Natural killer cell (primary cell): ENCODE measurements at regions of chr6 and their contacts with region 1.

Region 1: GRCh38 chr6:29964887-29965562 is 22.7 kb downstream of the HLA-A start:
- DNase-seq: peak; percentile 67 to 91
- ATAC-seq: peak; percentile 91 to 99 (median 97)
- H3K4me3 ChIP-seq: peak overlapping the region; percentile 34
- H3K4me3 Mint-ChIP-seq: peak overlapping the region; percentile 87
- H3K27ac ChIP-seq: peak overlapping the region; percentile 73
- H3K27ac Mint-ChIP-seq: peak overlapping the region; percentile 86 to 91
- H3K4me1 ChIP-seq: peaks cover 22% of the 10 kb centered on the region
- H3K4me1 Mint-ChIP-seq: peaks cover 32 to 35% of the 10 kb centered on the region in 2 donors
- H3K27me3 ChIP-seq: no peaks in the 10 kb centered on the region
- H3K27me3 Mint-ChIP-seq: no peaks in the 10 kb centered on the region
- CTCF ChIP-seq: no peak

Region 2: DNA sequence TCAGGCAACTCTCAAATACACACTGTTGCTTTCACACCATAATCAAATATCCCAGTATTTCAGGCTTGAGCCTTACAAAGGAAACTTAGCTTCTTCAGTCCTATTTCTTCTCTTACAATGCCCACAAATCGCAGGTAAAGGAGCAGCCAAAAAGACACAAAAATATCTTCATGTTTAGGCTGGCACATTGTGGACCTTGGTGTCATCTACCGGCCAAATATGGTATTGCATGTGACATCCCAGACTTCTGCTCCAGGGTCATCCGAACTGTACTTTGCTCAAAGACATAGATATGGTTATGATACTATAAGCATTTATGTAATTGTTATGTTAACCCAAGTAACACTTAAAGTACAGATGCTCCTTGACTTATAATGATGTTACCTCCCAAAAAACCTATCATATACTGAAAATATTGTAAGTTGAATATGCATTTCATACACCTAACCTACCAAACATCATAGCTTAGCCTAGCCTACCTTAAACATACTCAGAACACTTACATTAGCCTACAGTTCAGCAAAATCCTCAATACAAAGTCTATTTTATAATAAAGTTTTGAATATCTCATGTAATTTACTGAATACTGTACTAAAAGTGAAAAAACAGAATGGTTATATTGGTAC is 375.5 kb before region 1 on chr6:
- intact Hi-C with region 1: no loop called
- DNase-seq: peak in 1 of 2 donors; percentile 79
- ATAC-seq: peak; percentile 70 to 85 (median 82)
- H3K4me3 ChIP-seq: no peak overlapping the region
- H3K4me3 Mint-ChIP-seq: no peak overlapping the region
- H3K27ac ChIP-seq: no peak overlapping the region
- H3K27ac Mint-ChIP-seq: no peak overlapping the region
- H3K4me1 ChIP-seq: no peaks in the 10 kb centered on the region
- H3K4me1 Mint-ChIP-seq: no peaks in the 10 kb centered on the region
- H3K27me3 ChIP-seq: no peaks in the 10 kb centered on the region
- H3K27me3 Mint-ChIP-seq: peaks cover 28 to 51% of the 10 kb centered on the region in 2 donors
- CTCF ChIP-seq: peak; percentile 98

Region 3: DNA sequence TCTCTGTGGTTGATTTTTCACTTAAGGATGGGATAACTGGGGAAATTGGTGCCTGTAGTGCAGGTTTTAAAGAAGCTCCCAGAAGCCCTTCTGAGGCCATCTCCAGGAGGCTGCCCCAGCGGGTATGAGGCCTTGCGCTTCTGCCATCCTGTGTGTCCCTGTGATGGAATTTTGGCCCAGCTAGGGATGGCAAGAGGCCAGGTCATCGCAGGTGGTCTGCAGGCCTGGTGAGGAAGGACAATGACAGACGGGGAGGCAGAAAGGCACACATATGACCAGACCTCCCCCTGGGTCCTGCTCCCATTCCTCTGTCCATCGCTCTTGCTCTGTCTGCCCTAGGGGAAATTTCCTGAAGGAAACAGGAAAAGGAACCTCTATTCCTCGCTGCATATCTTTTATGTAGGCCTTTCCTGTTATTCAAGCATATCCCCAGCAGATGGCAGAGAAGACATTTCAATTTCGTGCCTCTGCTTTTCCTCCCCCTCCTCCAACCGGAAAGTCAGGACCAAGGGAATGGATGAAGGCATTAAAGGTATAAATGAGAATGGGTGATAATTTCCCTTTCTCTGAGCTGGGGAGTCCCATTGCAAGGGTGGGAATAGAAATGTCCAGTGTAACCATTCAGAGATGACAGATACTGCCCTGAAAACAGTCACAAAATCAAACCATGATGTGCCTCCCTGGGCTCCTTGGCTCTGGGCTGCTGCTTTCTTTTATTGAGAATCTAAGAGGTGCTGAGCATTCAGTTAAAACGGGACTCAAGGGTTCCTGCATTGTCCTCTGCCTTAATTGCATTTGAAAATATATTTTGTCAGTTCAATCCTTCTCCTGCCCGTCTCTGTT is 259.4 kb before region 1 on chr6:
- intact Hi-C with region 1: loop called (anchors 10 kb)
- DNase-seq: peak in 1 of 2 donors; percentile 73
- ATAC-seq: no peak
- H3K4me3 ChIP-seq: no peak overlapping the region
- H3K4me3 Mint-ChIP-seq: peak overlapping the region; percentile 55
- H3K27ac ChIP-seq: no peak overlapping the region
- H3K27ac Mint-ChIP-seq: peak overlapping the region; percentile 65 to 87
- H3K4me1 ChIP-seq: peaks cover 52% of the 10 kb centered on the region
- H3K4me1 Mint-ChIP-seq: peaks cover 57 to 66% of the 10 kb centered on the region in 2 donors
- H3K27me3 ChIP-seq: peaks cover 6% of the 10 kb centered on the region
- H3K27me3 Mint-ChIP-seq: peaks cover 10 to 17% of the 10 kb centered on the region in 2 donors
- CTCF ChIP-seq: peak; percentile 67

Region 4: DNA sequence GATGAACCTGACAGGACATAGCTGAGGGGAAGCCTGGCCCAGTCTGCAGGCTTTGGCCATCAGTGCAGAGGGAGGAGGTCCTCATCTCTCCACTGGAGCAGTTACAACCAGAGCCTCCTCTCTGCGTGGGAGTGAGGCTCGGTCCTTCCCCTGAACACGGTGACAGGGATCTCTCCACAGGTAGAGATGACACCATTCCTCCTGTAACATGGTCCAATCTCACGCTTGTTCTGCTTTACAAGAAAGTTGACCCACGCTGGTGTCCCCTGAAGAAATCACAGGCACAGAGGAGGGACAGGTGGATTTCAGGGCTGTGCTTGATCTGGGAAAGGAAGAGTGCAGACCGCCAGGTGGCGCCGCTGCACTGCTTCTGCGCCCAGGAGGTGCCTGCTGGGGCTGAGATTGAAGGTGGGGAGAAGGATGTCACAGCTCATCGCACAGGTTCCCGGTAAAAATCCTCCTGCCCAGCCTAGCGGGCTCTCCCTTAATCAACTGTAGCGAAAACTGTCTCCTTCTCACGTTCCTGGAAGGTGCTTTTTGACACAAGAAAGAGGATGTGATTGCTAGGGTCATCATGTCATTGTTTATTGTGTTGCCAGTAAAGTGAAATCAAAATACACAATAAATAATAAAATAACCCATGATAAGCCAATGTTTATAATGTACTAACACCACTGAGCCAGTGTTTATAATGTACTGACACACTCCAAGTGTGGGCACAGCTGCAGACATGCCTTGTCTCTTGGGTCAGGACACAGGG is 117.0 kb before region 1 on chr6:
- intact Hi-C with region 1: loop called (anchors 2 kb)
- DNase-seq: peak; percentile 83 to 93
- ATAC-seq: peak; percentile 82 to 95 (median 89)
- H3K4me3 ChIP-seq: no peak overlapping the region
- H3K4me3 Mint-ChIP-seq: no peak overlapping the region
- H3K27ac ChIP-seq: no peak overlapping the region
- H3K27ac Mint-ChIP-seq: no peak overlapping the region
- H3K4me1 ChIP-seq: peaks cover 10% of the 10 kb centered on the region
- H3K4me1 Mint-ChIP-seq: peaks cover 12 to 16% of the 10 kb centered on the region in 2 donors
- H3K27me3 ChIP-seq: peaks cover 29% of the 10 kb centered on the region
- H3K27me3 Mint-ChIP-seq: peaks cover 53 to 75% of the 10 kb centered on the region in 2 donors
- CTCF ChIP-seq: peak; percentile 97

Region 5: GRCh38 chr6:29887819-29888776 is 76.9 kb before region 1 on chr6:
- intact Hi-C with region 1: loop called (anchors 5 kb)
- DNase-seq: peak; percentile 90 to 92
- ATAC-seq: peak; percentile 75 to 91 (median 77)
- H3K4me3 ChIP-seq: peak overlapping the region; percentile 92
- H3K4me3 Mint-ChIP-seq: peak overlapping the region; percentile 94
- H3K27ac ChIP-seq: peak overlapping the region; percentile 97
- H3K27ac Mint-ChIP-seq: peak overlapping the region; percentile 94 to 99
- H3K4me1 ChIP-seq: peaks cover 19% of the 10 kb centered on the region
- H3K4me1 Mint-ChIP-seq: peaks cover 12 to 30% of the 10 kb centered on the region in 2 donors
- H3K27me3 ChIP-seq: no peaks in the 10 kb centered on the region
- H3K27me3 Mint-ChIP-seq: no peaks in the 10 kb centered on the region
- CTCF ChIP-seq: no peak

Region 6: DNA sequence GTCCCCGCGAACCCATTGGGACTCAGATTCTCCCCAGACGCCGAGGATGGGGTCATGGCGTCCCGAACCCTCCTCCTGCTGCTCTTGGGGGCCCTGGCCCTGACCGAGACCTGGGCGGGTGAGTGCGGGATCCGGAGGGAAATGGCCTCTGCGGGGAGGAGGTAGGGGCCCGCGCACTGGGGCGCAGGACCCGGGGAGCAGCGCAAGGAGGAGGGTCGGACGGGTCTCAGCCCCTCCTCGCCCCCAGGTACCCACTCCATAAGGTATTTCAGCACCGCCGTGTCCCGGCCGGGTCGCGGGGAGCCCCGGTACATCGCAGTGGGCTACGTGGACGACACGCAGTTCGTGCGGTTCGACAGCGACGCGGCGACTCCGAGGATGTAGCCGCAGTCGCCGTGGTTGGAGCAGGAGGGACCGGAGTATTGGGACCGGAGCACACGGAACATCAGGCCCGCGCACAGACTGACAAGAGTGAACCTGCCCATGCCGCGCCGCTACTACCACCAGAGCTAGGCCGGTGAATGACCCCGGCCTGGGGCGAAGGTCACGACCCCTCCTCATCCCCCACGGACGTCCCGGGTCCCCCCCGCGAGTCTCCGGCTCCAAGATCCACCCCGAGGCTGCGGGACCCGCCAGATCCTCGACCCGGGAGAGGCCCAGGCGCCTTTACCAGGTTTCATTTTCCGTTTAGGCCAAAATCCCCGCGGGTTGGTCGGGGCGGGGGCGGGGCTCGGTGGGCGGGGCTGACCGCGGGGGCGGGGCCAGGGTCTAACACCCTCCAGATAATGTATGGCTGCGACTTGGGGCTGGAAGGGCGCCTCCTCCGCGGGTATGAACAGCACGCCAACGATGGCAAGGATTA is 38.4 kb before region 1 on chr6:
- intact Hi-C with region 1: loop called (anchors 5 kb)
- DNase-seq: peak; percentile 76 to 92
- ATAC-seq: peak; percentile 86 to 95 (median 88)
- H3K4me3 ChIP-seq: peak overlapping the region; percentile 86
- H3K4me3 Mint-ChIP-seq: peak overlapping the region; percentile 88
- H3K27ac ChIP-seq: peak overlapping the region; percentile 98
- H3K27ac Mint-ChIP-seq: peak overlapping the region; percentile 90 to 91
- H3K4me1 ChIP-seq: peaks cover 17% of the 10 kb centered on the region
- H3K4me1 Mint-ChIP-seq: peaks cover 6 to 28% of the 10 kb centered on the region in 2 donors
- H3K27me3 ChIP-seq: no peaks in the 10 kb centered on the region
- H3K27me3 Mint-ChIP-seq: no peaks in the 10 kb centered on the region
- CTCF ChIP-seq: no peak

Region 7: DNA sequence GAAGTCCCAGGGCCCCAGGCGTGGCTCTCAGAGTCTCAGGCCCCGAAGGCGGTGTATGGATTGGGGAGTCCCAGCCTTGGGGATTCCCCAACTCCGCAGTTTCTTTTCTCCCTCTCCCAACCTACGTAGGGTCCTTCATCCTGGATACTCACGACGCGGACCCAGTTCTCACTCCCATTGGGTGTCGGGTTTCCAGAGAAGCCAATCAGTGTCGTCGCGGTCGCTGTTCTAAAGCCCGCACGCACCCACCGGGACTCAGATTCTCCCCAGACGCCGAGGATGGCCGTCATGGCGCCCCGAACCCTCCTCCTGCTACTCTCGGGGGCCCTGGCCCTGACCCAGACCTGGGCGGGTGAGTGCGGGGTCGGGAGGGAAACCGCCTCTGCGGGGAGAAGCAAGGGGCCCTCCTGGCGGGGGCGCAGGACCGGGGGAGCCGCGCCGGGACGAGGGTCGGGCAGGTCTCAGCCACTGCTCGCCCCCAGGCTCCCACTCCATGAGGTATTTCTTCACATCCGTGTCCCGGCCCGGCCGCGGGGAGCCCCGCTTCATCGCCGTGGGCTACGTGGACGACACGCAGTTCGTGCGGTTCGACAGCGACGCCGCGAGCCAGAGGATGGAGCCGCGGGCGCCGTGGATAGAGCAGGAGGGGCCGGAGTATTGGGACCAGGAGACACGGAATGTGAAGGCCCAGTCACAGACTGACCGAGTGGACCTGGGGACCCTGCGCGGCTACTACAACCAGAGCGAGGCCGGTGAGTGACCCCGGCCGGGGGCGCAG is 22.6 kb before region 1 on chr6 and contains the start of gene HLA-A:
- intact Hi-C with region 1: loop called (anchors 1 kb)
- DNase-seq: peak; percentile 95 to 98
- ATAC-seq: peak; percentile 80 to 91 (median 84)
- H3K4me3 ChIP-seq: peak within 1 kb of the TSS; percentile 57
- H3K4me3 Mint-ChIP-seq: peak within 1 kb of the TSS; percentile 99
- H3K27ac ChIP-seq: peak within 1 kb of the TSS; percentile 93
- H3K27ac Mint-ChIP-seq: peak within 1 kb of the TSS; percentile 89 to 100
- H3K4me1 ChIP-seq: peaks cover 36% of the 10 kb centered on the region
- H3K4me1 Mint-ChIP-seq: peaks cover 62 to 69% of the 10 kb centered on the region in 2 donors
- H3K27me3 ChIP-seq: no peaks in the 10 kb centered on the region
- H3K27me3 Mint-ChIP-seq: peaks cover 0 to 4% of the 10 kb centered on the region in 2 donors
- CTCF ChIP-seq: no peak
- total RNA-seq, gene HLA-A: 2,088 to 2,855 (median 2,731) TPM

Region 8: GRCh38 chr6:29989211-29989610 is 24.2 kb after region 1 on chr6:
- intact Hi-C with region 1: no loop called
- DNase-seq: no peak
- ATAC-seq: no peak
- H3K4me3 ChIP-seq: no peak overlapping the region
- H3K4me3 Mint-ChIP-seq: no peak overlapping the region
- H3K27ac ChIP-seq: no peak overlapping the region
- H3K27ac Mint-ChIP-seq: no peak overlapping the region
- H3K4me1 ChIP-seq: no peaks in the 10 kb centered on the region
- H3K4me1 Mint-ChIP-seq: no peaks in the 10 kb centered on the region
- H3K27me3 ChIP-seq: no peaks in the 10 kb centered on the region
- H3K27me3 Mint-ChIP-seq: peaks cover 22% of the 10 kb centered on the region in 2 donors
- CTCF ChIP-seq: no peak

Region 9: DNA sequence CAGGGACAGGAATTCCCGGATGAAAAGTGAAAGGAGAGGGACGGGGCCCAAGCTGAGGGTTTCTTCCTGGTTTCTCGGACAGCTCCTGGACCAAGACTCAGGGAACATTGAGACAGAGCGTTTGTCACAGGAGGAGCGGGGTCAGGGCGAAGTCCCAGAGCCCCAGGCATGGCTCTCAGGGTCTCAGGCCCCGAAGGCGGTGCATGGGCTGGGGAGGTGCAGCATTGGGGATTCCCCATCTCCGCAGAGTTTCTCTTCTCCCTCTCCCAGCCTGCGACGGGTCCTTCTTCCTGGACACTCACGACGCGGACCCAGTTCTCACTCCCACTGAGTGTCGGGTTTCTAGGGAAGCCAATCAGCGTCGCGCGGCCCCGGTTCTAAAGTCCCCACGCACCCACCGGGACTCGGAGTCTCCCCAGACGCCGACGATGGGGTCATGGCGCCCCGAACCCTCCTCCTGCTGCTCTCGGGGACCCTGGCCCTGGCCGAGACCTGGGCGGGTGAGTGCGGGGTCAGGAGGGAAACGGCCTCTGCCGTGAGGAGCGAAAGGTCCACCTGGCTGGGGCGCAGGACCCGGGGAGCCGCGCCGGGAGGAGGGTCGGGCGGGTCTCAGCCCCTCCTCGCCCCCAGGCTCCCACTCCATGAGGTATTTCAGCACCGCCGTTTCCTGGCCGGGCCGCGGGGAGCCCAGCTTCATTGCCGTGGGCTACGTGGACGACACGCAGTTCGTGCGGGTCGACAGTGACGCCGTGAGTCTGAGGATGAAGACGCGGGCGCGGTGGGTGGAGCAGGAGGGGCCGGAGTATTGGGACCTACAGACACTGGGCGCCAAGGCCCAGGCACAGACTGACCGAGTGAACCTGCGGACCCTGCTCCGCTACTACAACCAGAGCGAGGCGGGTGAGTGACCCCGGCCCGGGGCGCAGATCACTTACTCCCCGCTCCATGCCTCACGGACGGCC is 41.4 kb after region 1 on chr6:
- intact Hi-C with region 1: loop called (anchors 5 kb)
- DNase-seq: peak; percentile 18 to 42
- ATAC-seq: peak; percentile 35 to 59 (median 58)
- H3K4me3 ChIP-seq: peak overlapping the region; percentile 30
- H3K4me3 Mint-ChIP-seq: peak overlapping the region; percentile 80
- H3K27ac ChIP-seq: no peak overlapping the region
- H3K27ac Mint-ChIP-seq: peak overlapping the region in 1 of 2 donors; percentile 72
- H3K4me1 ChIP-seq: peaks cover 20% of the 10 kb centered on the region
- H3K4me1 Mint-ChIP-seq: peaks cover 7 to 26% of the 10 kb centered on the region in 2 donors
- H3K27me3 ChIP-seq: peaks cover 25% of the 10 kb centered on the region
- H3K27me3 Mint-ChIP-seq: peaks cover 30% of the 10 kb centered on the region in 2 donors
- CTCF ChIP-seq: no peak

Region 10: GRCh38 chr6:30364591-30364990 is 399.6 kb after region 1 on chr6:
- intact Hi-C with region 1: no loop called
- DNase-seq: no peak
- ATAC-seq: no peak
- H3K4me3 ChIP-seq: no peak overlapping the region
- H3K4me3 Mint-ChIP-seq: no peak overlapping the region
- H3K27ac ChIP-seq: no peak overlapping the region
- H3K27ac Mint-ChIP-seq: no peak overlapping the region
- H3K4me1 ChIP-seq: no peaks in the 10 kb centered on the region
- H3K4me1 Mint-ChIP-seq: no peaks in the 10 kb centered on the region
- H3K27me3 ChIP-seq: peaks cover 20% of the 10 kb centered on the region
- H3K27me3 Mint-ChIP-seq: peaks cover 48 to 60% of the 10 kb centered on the region in 2 donors
- CTCF ChIP-seq: no peak